Activated CD4-positive, alpha-beta T cell treated with anti-CD3 and anti-CD28 coated beads, Interleukin-2, amount 10 ng/mL, durations not matched to agents 7 days and 5 days (primary cell): ENCODE measurements at regions of chr7 and their contacts with region 1.

Region 1: GRCh38 chr7:128739048-128739962 is at the start of gene CALU:
- DNase-seq: peak; percentile 96
- H3K4me3 Mint-ChIP-seq: peak within 1 kb of the TSS; percentile 95
- H3K27ac Mint-ChIP-seq: peak within 1 kb of the TSS; percentile 98
- H3K4me1 Mint-ChIP-seq: peaks cover 41% of the 10 kb centered on the region
- H3K27me3 Mint-ChIP-seq: no peaks in the 10 kb centered on the region
- total RNA-seq, gene CALU: 29.5 to 32.1 TPM

Region 2: GRCh38 chr7:128726059-128726736 is 13.1 kb before region 1 on chr7:
- CTCF ChIA-PET with region 1: interaction called, 13 read pairs
- POLR2A ChIA-PET with region 1: no interaction called
- DNase-seq: no peak
- H3K4me3 Mint-ChIP-seq: no peak overlapping the region
- H3K27ac Mint-ChIP-seq: no peak overlapping the region
- H3K4me1 Mint-ChIP-seq: no peaks in the 10 kb centered on the region
- H3K27me3 Mint-ChIP-seq: peaks cover 27% of the 10 kb centered on the region

Region 3: GRCh38 chr7:128752251-128752650 is 12.9 kb after region 1 on chr7:
- CTCF ChIA-PET with region 1: interaction called, 11 read pairs
- POLR2A ChIA-PET with region 1: no interaction called
- DNase-seq: no peak
- H3K4me3 Mint-ChIP-seq: no peak overlapping the region
- H3K27ac Mint-ChIP-seq: no peak overlapping the region
- H3K4me1 Mint-ChIP-seq: peaks cover 2% of the 10 kb centered on the region
- H3K27me3 Mint-ChIP-seq: no peaks in the 10 kb centered on the region